IMR-90 (cell line): ENCODE measurements at regions of chr3 and their contacts with region 1.

Region 1: GRCh38 chr3:136075218-136075808 is 109.8 kb downstream of the PPP2R3A start:
- DNase-seq: peak; percentile 80
- ATAC-seq: peak; percentile 62
- H3K4me3 ChIP-seq: no peak overlapping the region
- H3K27ac ChIP-seq: no peak overlapping the region
- H3K4me1 ChIP-seq: peaks cover 10% of the 10 kb centered on the region
- H3K27me3 ChIP-seq: no peaks in the 10 kb centered on the region
- CTCF ChIP-seq: peak; percentile 96
- POLR2A ChIP-seq: no peak
- RAD21 ChIP-seq: peak; percentile 95

Region 2: DNA sequence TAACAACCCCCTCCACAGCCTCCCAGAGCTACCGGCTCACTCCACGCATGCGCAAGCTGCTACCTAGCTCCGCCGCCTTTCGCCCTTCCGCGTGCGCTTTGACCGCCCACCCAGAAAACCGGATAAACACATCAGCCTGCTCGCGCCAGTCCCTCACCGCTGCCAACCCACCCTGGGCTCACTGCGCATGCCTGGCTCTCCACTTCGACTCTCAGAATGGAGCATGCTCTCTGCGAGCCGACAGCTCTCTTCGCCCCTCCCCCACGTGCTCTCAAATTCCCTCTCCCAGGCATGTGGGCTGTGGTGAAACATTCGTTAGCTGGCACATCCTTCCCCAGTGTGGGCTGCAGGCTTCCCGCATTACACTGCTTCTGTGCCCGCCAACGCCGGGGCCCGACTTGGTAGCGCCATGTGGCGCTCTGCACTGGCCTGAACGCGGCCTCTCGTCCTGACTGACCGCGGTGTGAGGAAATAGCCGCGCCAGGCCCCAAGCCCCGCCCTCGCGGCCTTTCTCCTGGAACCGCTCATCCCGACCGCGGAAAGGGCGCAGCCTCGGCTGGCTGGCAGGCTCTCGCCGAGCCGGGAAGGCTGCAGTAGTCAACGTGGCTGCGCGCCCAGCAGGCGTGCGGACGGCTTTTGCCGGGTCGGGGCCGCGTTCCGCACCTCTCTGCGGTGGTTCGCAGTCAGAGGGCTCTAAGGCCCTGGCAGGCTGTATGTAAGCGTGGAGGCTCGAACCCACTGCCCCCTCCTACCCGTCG is 121.3 kb after region 1 on chr3:
- CTCF ChIA-PET with region 1: no interaction called
- POLR2A ChIA-PET with region 1: no interaction called
- dilution Hi-C with region 1: no loop called
- in situ Hi-C with region 1: no loop called
- intact Hi-C with region 1: loop called (anchors 2 kb)
- DNase-seq: peak; percentile 100
- ATAC-seq: peak; percentile 79
- H3K4me3 ChIP-seq: peak overlapping the region; percentile 97
- H3K27ac ChIP-seq: peak overlapping the region; percentile 81
- H3K4me1 ChIP-seq: peaks cover 3% of the 10 kb centered on the region; the same call in 1 of the 2 replicates
- H3K27me3 ChIP-seq: no peaks in the 10 kb centered on the region
- CTCF ChIP-seq: no peak
- POLR2A ChIP-seq: peak; percentile 88
- RAD21 ChIP-seq: peak; percentile 9; the same call in 1 of the 2 replicates

Region 3: GRCh38 chr3:136250226-136250902 is 175.1 kb after region 1 on chr3 and contains the start of gene PCCB:
- CTCF ChIA-PET with region 1: interaction called, 4 read pairs
- POLR2A ChIA-PET with region 1: no interaction called
- dilution Hi-C with region 1: no loop called
- in situ Hi-C with region 1: loop called (anchors 10 kb)
- intact Hi-C with region 1: no loop called
- DNase-seq: peak; percentile 93
- ATAC-seq: peak; percentile 100
- H3K4me3 ChIP-seq: peak within 1 kb of the TSS; percentile 85
- H3K27ac ChIP-seq: peak within 1 kb of the TSS; percentile 81
- H3K4me1 ChIP-seq: peaks cover 4% of the 10 kb centered on the region; the same call in 1 of the 2 replicates
- H3K27me3 ChIP-seq: no peaks in the 10 kb centered on the region
- CTCF ChIP-seq: peak; percentile 65
- POLR2A ChIP-seq: peak; percentile 61
- RAD21 ChIP-seq: peak; percentile 42
- total RNA-seq, gene PCCB: 63.6 and 76.2 TPM in 2 replicates

Region 4: GRCh38 chr3:136305878-136306277 is 230.6 kb after region 1 on chr3:
- CTCF ChIA-PET with region 1: interaction called, 6 read pairs
- POLR2A ChIA-PET with region 1: no interaction called
- dilution Hi-C with region 1: no loop called
- in situ Hi-C with region 1: loop called (anchors 10 kb)
- intact Hi-C with region 1: loop called (anchors 1 kb)
- DNase-seq: peak; percentile 70
- ATAC-seq: peak; percentile 92
- H3K4me3 ChIP-seq: no peak overlapping the region
- H3K27ac ChIP-seq: no peak overlapping the region
- H3K4me1 ChIP-seq: no peaks in the 10 kb centered on the region
- H3K27me3 ChIP-seq: no peaks in the 10 kb centered on the region
- CTCF ChIP-seq: peak; percentile 87
- POLR2A ChIP-seq: no peak
- RAD21 ChIP-seq: peak; percentile 88

Region 5: GRCh38 chr3:136396916-136397315 is 321.6 kb after region 1 on chr3:
- CTCF ChIA-PET with region 1: no interaction called
- POLR2A ChIA-PET with region 1: no interaction called
- dilution Hi-C with region 1: no loop called
- in situ Hi-C with region 1: no loop called
- intact Hi-C with region 1: loop called (anchors 10 kb)
- DNase-seq: peak; percentile 73
- ATAC-seq: peak; percentile 81
- H3K4me3 ChIP-seq: no peak overlapping the region
- H3K27ac ChIP-seq: peak overlapping the region; percentile 93; the same call in 1 of the 2 replicates
- H3K4me1 ChIP-seq: peaks cover 8% of the 10 kb centered on the region
- H3K27me3 ChIP-seq: no peaks in the 10 kb centered on the region
- CTCF ChIP-seq: no peak
- POLR2A ChIP-seq: no peak
- RAD21 ChIP-seq: no peak

Region 6: DNA sequence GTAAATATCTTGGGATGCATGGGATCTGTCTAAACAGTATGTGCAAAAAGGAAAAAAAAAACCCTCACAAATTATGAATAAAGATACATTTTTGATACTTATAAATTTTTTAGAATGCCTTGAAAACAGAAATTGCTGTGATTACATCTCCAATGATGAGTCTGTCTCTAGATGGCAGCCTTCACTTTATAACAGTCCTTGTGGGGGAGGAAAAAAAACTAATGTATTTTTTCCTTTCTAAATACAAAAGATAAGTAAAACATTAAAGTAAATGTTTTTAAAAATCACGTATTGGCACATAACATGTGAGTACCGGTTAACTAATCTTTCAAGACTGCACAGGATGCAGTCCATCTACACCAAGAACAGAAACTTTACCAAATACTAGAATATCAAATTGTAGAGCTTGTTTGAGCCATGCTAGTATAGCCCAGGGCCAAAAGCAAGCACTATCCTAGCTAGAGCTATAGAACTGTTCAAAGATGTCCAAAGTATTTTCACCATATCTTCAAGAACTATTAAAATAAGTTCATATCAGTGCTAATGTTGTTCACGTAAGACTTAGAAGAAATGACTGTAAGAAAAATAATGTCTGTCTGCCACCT is 470.5 kb after region 1 on chr3:
- CTCF ChIA-PET with region 1: no interaction called
- POLR2A ChIA-PET with region 1: no interaction called
- dilution Hi-C with region 1: no loop called
- in situ Hi-C with region 1: no loop called
- intact Hi-C with region 1: loop called (anchors 10 kb)
- DNase-seq: peak; percentile 51
- ATAC-seq: peak; percentile 54; the same call in 1 of the 2 replicates
- H3K4me3 ChIP-seq: no peak overlapping the region
- H3K27ac ChIP-seq: no peak overlapping the region
- H3K4me1 ChIP-seq: peaks cover 13% of the 10 kb centered on the region
- H3K27me3 ChIP-seq: no peaks in the 10 kb centered on the region
- CTCF ChIP-seq: peak; percentile 53
- POLR2A ChIP-seq: no peak
- RAD21 ChIP-seq: peak; percentile 54

Region 7: DNA sequence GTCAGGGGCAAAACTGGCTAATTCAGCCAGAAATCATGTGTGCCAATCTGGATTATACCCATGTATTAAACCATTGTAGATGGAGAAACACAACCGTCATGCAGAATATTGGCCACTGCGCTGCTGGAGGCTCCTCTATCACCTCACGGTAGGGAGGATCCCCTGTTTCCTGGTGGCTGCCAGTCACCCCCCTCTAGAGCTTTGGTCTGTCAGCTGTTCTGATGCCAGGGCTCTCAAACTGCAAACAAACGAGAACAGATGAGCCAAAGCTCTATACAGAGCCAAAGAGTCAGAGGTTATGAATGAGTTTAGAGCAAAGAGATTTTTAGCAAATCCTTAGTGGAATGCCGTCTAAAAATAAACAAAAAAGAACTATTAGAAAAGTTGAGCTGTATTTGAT is 945.0 kb after region 1 on chr3:
- CTCF ChIA-PET with region 1: no interaction called
- POLR2A ChIA-PET with region 1: no interaction called
- dilution Hi-C with region 1: no loop called
- in situ Hi-C with region 1: loop called (anchors 5 kb)
- intact Hi-C with region 1: no loop called
- DNase-seq: peak; percentile 27
- ATAC-seq: peak; percentile 85
- H3K4me3 ChIP-seq: no peak overlapping the region
- H3K27ac ChIP-seq: no peak overlapping the region
- H3K4me1 ChIP-seq: peaks cover 2% of the 10 kb centered on the region; the same call in 1 of the 2 replicates
- H3K27me3 ChIP-seq: peaks cover 2% of the 10 kb centered on the region; the same call in 1 of the 2 replicates
- CTCF ChIP-seq: no peak
- POLR2A ChIP-seq: no peak
- RAD21 ChIP-seq: no peak